ENCODE measurements at regions of chr5 and their contacts with region 1.

Region 1: DNA sequence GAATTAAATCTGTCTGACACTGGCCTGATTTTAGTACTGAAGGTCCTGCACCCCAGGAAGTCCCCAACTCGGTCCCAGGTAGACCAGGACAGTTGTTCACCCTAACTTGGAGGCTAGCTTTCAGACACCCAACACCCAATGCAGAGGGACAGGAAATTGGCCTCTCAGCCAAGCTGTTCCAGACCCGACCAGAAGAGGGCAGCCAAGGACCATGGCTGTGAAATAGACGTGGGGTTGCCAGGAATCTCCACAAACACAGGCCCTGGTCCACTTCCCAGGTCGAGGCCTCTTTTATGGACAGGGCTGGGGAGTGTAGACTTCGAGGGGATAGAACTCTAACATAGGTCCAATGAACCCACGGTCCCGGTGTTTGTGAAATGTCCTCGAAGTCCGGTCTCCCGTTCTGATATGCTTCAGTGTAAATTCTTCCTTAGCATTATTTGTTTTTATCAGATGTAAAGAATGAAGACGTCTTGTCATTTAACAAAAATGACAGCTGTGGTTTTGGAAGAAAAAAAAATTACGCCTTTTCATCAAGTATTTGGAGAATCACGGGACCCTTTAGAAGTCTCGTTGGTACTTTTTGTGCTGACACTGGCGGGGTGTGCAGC is 260.3 kb upstream of the ADAMTS16 start:
- DNase-seq: peak; percentile 84 to 87
- H3K4me3 ChIP-seq: no peak overlapping the region
- H3K27ac ChIP-seq: no peak overlapping the region
- H3K4me1 ChIP-seq: no peaks in the 10 kb centered on the region
- H3K27me3 ChIP-seq: no peaks in the 10 kb centered on the region
- CTCF ChIP-seq: peak; percentile 42 to 68 (median 63)
- POLR2A ChIP-seq: no peak

Region 2: DNA sequence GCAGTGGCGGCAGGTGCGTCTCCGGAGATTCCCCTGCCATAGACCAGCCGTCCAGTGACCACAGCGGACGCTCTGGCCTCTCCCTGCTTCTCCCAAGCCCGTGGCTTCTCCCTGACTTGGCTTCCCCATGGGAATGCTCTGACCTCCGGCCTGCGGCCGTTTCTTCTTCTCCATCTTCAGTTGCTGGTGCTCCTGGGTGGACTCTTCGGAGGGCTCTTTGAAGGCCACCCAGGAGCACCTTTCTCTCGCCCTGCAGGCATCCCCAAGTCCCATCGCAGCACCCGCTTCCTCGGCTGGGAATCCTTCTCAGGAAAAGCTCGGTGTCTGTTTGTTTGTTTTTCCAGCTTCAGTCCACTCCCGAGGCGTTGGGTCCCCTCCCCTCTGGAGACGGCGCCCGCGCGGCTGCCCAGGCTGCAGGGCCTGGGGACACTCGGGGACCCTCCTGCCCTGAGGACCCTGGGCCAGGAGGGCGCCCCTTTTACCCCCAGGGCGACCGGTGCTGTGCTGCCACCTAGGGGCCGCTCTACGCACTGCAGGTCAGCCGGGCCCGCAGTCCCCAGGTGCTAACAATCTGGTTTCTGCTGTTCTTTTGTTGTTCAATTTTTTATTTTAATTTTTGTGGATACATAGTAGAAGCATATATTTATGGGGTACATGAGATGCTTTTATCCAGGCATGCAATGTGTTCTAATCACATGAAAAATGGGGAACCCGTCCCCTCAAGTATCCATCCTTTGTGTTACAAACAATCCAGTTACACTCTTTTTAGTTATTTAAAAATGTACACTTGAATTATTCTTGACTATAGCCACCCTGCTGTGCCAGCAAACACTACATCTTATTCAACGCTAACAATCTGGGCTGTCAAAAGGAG is 62.4 kb after region 1 on chr5:
- intact Hi-C with region 1: loop called (anchors 5 kb)
- DNase-seq: no peak
- H3K4me3 ChIP-seq: no peak overlapping the region
- H3K27ac ChIP-seq: no peak overlapping the region
- H3K4me1 ChIP-seq: no peaks in the 10 kb centered on the region
- H3K27me3 ChIP-seq: no peaks in the 10 kb centered on the region
- CTCF ChIP-seq: peak in 2 of 3 experiments; percentile 42 to 46
- POLR2A ChIP-seq: no peak

Measured in vagina (tissue), 2 donors.